ENCODE measurements at regions of chr16 and their contacts with region 1.

Region 1: GRCh38 chr16:24036614-24037013 is 200.8 kb downstream of the PRKCB start:
- DNase-seq: peak; percentile 46
- ATAC-seq: peak; percentile 81
- H3K4me3 ChIP-seq: no peak overlapping the region
- H3K27ac ChIP-seq: no peak overlapping the region
- H3K4me1 ChIP-seq: no peaks in the 10 kb centered on the region
- H3K27me3 ChIP-seq: no peaks in the 10 kb centered on the region; a peak in 1 of 5 replicates
- CTCF ChIP-seq: peak; percentile 92
- EP300 ChIP-seq: no peak
- POLR2A ChIP-seq: no peak
- RAD21 ChIP-seq: peak; percentile 88

Region 2: GRCh38 chr16:23739516-23739915 is 297.1 kb before region 1 on chr16:
- CTCF ChIA-PET with region 1: interaction called, 12 read pairs
- POLR2A ChIA-PET with region 1: no interaction called
- in situ Hi-C with region 1: loop called (anchors 5 kb)
- intact Hi-C with region 1: loop called (anchors 1 kb)
- DNase-seq: peak; percentile 58
- ATAC-seq: peak; percentile 74
- H3K4me3 ChIP-seq: no peak overlapping the region
- H3K27ac ChIP-seq: no peak overlapping the region
- H3K4me1 ChIP-seq: peaks cover 17% of the 10 kb centered on the region
- H3K27me3 ChIP-seq: peaks cover 0 to 3% of the 10 kb centered on the region in 2 experiments; a peak in 2 of 5 replicates
- CTCF ChIP-seq: no peak
- EP300 ChIP-seq: no peak
- POLR2A ChIP-seq: no peak
- RAD21 ChIP-seq: no peak

Region 3: GRCh38 chr16:24075931-24076716 is 39.5 kb after region 1 on chr16:
- CTCF ChIA-PET with region 1: no interaction called
- POLR2A ChIA-PET with region 1: no interaction called
- in situ Hi-C with region 1: no loop called
- intact Hi-C with region 1: no loop called
- DNase-seq: no peak
- ATAC-seq: no peak
- H3K4me3 ChIP-seq: no peak overlapping the region
- H3K27ac ChIP-seq: no peak overlapping the region
- H3K4me1 ChIP-seq: no peaks in the 10 kb centered on the region
- H3K27me3 ChIP-seq: 0 out of 5 replicates have a peak, but pooled peaks cover 0 to 3% of the 10 kb centered on the region in 2 experiments
- CTCF ChIP-seq: no peak
- EP300 ChIP-seq: no peak
- POLR2A ChIP-seq: no peak
- RAD21 ChIP-seq: no peak

Region 4: DNA sequence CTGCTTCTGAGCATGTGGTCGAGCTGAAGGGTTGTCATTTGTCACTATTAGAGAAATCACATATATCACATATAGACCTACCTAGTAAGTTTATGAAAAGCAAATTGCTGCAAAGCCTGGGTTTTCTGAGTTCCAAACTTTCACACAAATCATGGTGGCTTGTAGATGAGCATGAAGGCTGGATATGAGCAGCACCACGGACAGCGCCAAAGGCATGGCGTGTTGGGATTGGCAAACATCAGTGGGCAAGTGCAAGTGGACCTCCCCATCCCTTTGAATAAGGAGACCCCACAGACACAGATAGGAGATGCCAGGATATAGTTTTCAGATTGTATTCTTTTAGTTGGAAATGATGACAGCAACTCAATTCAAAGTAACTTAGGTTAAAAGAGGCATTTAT is 141.9 kb after region 1 on chr16:
- CTCF ChIA-PET with region 1: no interaction called
- POLR2A ChIA-PET with region 1: no interaction called
- in situ Hi-C with region 1: no loop called
- intact Hi-C with region 1: no loop called
- DNase-seq: no peak
- ATAC-seq: no peak
- H3K4me3 ChIP-seq: no peak overlapping the region
- H3K27ac ChIP-seq: no peak overlapping the region
- H3K4me1 ChIP-seq: no peaks in the 10 kb centered on the region
- H3K27me3 ChIP-seq: peaks cover 0 to 3% of the 10 kb centered on the region in 2 experiments; a peak in 2 of 5 replicates
- CTCF ChIP-seq: no peak
- EP300 ChIP-seq: no peak
- POLR2A ChIP-seq: no peak
- RAD21 ChIP-seq: no peak